Heart right ventricle (tissue), 16 donors: ENCODE measurements at regions of chr2 and their contacts with region 1.

Region 1: DNA sequence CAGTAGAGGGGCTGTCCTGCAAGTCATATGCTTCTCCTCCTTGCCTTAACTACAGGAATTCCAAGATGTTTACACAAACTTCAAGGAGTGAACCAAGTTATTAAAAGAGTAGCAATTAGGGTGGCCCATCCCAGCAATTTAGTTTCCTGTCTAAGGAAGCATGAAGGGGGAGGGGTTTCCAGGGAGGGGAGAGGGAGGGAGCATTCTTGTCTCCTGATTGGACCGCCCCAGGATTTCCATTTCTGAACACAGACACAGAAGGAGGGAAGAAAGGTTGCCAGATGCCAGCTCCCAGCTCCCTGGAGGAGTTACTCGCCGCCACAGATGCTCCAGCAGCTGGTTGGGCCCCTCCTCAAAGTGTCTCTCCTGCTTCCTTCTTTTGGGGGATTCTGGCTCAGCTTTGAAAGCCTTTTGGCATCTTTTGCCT is 107.6 kb downstream of the TRIB2 start:
- DNase-seq: peak; percentile 35 to 78
- ATAC-seq: peak; percentile 65 to 86 (median 76)
- H3K4me3 ChIP-seq: peak overlapping the region in 1 of 10 donors; percentile 3
- H3K27ac ChIP-seq: peak overlapping the region; percentile 55 to 96 (median 90)
- H3K4me1 ChIP-seq: peaks cover 12 to 50% (median 41%) of the 10 kb centered on the region in 9 donors
- H3K27me3 ChIP-seq: no peaks in the 10 kb centered on the region
- CTCF ChIP-seq: no peak

Region 2: DNA sequence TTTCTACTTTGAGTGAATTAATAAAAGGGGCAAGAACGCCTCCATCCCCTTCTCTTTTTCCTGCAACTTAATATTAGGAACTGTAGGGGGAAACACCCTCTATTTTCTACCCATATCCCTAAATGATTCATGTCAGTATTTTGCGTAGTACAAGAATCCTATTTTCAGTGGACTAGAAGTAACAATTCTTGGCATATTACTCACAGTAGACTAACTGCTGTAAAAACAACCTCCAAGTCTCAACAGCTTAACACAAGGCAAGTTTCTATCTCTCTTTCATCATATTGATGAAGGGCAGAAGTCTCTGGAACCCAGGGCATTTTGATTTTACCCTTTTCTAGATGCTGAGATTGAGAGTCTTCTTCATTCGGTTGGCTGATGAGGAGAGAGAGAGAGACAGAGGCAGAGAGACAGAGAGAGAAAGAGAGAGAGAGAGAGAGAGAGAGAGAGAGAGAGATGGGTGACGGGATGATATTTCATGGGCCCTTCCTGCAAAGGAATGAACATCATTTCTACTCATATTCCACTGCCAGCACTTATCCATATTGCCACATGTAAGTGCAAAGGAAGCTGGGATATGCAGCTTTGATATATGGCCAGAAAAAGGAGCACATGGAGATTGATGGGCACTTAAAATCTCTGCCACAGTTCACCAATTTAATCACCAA is 596.3 kb before region 1 on chr2:
- intact Hi-C with region 1: no loop called
- DNase-seq: no peak
- ATAC-seq: no peak
- H3K4me3 ChIP-seq: no peak overlapping the region
- H3K27ac ChIP-seq: no peak overlapping the region
- H3K4me1 ChIP-seq: no peaks in the 10 kb centered on the region
- H3K27me3 ChIP-seq: no peaks in the 10 kb centered on the region
- CTCF ChIP-seq: no peak

Region 3: DNA sequence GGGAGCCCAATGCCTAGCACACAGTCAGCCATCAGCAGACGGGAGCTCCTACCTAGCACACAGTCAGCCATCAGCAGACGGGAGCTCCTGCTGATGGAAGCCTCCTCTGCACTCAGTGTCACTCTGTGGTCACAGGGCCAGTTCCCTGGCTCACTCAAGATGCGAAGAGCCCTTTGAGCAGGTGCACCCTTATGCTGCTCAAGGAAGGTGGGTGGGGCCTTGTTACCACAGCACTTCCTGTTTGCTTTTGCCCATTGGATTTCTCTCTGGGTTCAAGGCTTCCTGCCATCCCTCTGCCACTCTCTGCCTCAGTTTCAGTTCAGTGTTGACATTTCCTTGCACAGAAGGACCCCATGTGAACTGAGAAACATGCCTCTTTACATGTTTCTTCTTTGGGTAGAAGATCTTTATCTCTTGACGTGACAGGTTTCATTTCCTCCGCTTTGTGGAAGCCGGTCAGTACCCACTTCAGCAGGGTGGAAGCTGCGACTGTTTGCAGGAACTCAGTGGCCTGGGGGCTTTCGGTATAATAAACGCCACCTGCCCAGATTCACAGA is 96.1 kb before region 1 on chr2:
- intact Hi-C with region 1: loop called in 5 of 10 experiments (anchors 5 to 10 kb)
- DNase-seq: no peak
- ATAC-seq: no peak
- H3K4me3 ChIP-seq: peak overlapping the region in 1 of 10 donors; percentile 5
- H3K27ac ChIP-seq: peak overlapping the region in 5 of 10 donors; percentile 2 to 99 (median 36)
- H3K4me1 ChIP-seq: peaks cover 28 to 100% (median 95%) of the 10 kb centered on the region in 9 donors
- H3K27me3 ChIP-seq: no peaks in the 10 kb centered on the region
- CTCF ChIP-seq: no peak

Region 4: DNA sequence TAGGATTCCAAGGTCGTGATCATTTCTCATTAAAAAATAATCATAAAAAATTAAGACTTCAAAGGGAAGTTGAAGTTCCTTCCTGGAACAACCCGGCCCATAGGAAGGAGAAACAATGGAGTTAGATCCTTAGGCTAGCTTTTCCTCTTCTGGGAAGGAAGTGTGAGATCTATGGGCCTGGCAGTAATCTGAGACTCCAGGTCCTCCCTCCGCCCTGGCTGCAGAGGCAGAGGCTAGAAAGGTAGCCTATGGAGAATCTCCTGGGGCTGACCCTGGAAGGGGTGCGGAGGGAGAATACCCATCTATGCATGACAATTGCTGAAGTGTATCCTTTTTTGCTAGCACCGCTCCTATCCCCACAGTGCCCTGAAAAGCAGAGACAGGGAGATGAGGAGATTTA is 69.7 kb before region 1 on chr2:
- intact Hi-C with region 1: loop called in 1 of 10 experiments (anchors 2 kb)
- DNase-seq: no peak
- ATAC-seq: peak; percentile 37 to 88 (median 52)
- H3K4me3 ChIP-seq: no peak overlapping the region
- H3K27ac ChIP-seq: peak overlapping the region in 4 of 10 donors; percentile 44 to 70 (median 60)
- H3K4me1 ChIP-seq: peaks cover 0 to 42% (median 22%) of the 10 kb centered on the region in 9 donors
- H3K27me3 ChIP-seq: no peaks in the 10 kb centered on the region
- CTCF ChIP-seq: no peak

Region 5: GRCh38 chr2:12884713-12885282 is 60.4 kb after region 1 on chr2:
- intact Hi-C with region 1: loop called in 1 of 10 experiments (anchors 5 kb)
- DNase-seq: peak; percentile 30 to 69
- ATAC-seq: peak; percentile 82 to 95 (median 89)
- H3K4me3 ChIP-seq: no peak overlapping the region
- H3K27ac ChIP-seq: peak overlapping the region in 9 of 10 donors; percentile 32 to 76 (median 54)
- H3K4me1 ChIP-seq: peaks cover 11 to 30% (median 23%) of the 10 kb centered on the region in 9 donors
- H3K27me3 ChIP-seq: no peaks in the 10 kb centered on the region
- CTCF ChIP-seq: no peak

Region 6: GRCh38 chr2:12918835-12919445 is 94.6 kb after region 1 on chr2:
- intact Hi-C with region 1: loop called in 4 of 10 experiments (anchors 5 to 10 kb)
- DNase-seq: peak; percentile 61 to 63
- ATAC-seq: peak; percentile 80 to 98 (median 93)
- H3K4me3 ChIP-seq: peak overlapping the region in 1 of 10 donors; percentile 2
- H3K27ac ChIP-seq: peak overlapping the region; percentile 27 to 86 (median 76)
- H3K4me1 ChIP-seq: peaks cover 0 to 29% (median 21%) of the 10 kb centered on the region in 9 donors
- H3K27me3 ChIP-seq: no peaks in the 10 kb centered on the region
- CTCF ChIP-seq: no peak